ENCODE measurements at regions of chr4 and their contacts with region 1.

Region 1: GRCh38 chr4:110211007-110211769 is 12.8 kb upstream of the ELOVL6 start:
- DNase-seq: peak in 4 of 5 donors; percentile 39 to 48 (median 43)
- H3K4me3 ChIP-seq: no peak overlapping the region
- H3K4me3 Mint-ChIP-seq: peak overlapping the region in 3 of 8 donors; percentile 35 to 49 (median 36)
- H3K27ac ChIP-seq: no peak overlapping the region
- H3K27ac Mint-ChIP-seq: no peak overlapping the region
- H3K4me1 ChIP-seq: no peaks in the 10 kb centered on the region
- H3K4me1 Mint-ChIP-seq: peaks cover 0 to 5% (median 3%) of the 10 kb centered on the region in 4 donors
- H3K27me3 ChIP-seq: no peaks in the 10 kb centered on the region
- H3K27me3 Mint-ChIP-seq: peaks cover 2 to 3% of the 10 kb centered on the region in 2 donors

Region 2: DNA sequence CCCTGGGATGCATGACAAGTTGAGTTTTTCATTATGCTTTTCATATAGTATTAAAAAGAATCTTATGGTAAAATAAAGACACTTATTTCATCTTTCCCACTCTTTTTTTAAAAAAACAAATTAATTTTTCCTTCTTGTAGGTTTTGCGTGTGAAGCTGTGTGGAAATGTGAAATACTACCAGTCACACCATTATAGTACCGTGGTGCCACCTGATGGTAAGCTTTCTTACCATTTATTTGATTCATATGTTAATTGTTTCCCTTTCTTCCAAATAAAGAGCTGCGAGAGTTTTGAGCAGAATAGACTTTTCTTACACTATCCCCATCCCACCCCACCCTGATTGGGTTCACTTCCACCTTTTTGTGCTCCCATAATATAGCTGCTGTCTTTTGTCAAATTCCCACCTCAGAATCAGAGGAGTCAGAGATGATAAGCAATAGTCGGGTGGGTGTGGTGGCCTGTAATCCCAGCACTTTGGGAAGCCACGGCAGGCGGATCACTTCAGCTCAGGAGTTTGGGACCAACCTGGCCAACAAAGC is 552.2 kb before region 1 on chr4:
- CTCF ChIA-PET with region 1: no interaction called
- POLR2A ChIA-PET with region 1: no interaction called
- intact Hi-C with region 1: no loop called
- DNase-seq: peak in 2 of 5 donors; percentile 22 to 24
- H3K4me3 ChIP-seq: no peak overlapping the region
- H3K4me3 Mint-ChIP-seq: no peak overlapping the region
- H3K27ac ChIP-seq: no peak overlapping the region
- H3K27ac Mint-ChIP-seq: peak overlapping the region in 4 of 7 donors; percentile 24 to 65 (median 47)
- H3K4me1 ChIP-seq: peaks cover 23% of the 10 kb centered on the region
- H3K4me1 Mint-ChIP-seq: peaks cover 22 to 49% (median 35%) of the 10 kb centered on the region in 4 donors
- H3K27me3 ChIP-seq: no peaks in the 10 kb centered on the region
- H3K27me3 Mint-ChIP-seq: no peaks in the 10 kb centered on the region

Region 3: GRCh38 chr4:110059556-110060191 is 151.5 kb before region 1 on chr4:
- CTCF ChIA-PET with region 1: interaction called, 12 read pairs
- POLR2A ChIA-PET with region 1: no interaction called
- intact Hi-C with region 1: no loop called
- DNase-seq: peak in 4 of 5 donors; percentile 20 to 45 (median 34)
- H3K4me3 ChIP-seq: peak overlapping the region in 1 of 2 donors; percentile 38
- H3K4me3 Mint-ChIP-seq: peak overlapping the region; percentile 51 to 82 (median 80)
- H3K27ac ChIP-seq: no peak overlapping the region
- H3K27ac Mint-ChIP-seq: peak overlapping the region; percentile 38 to 91 (median 69)
- H3K4me1 ChIP-seq: peaks cover 28% of the 10 kb centered on the region
- H3K4me1 Mint-ChIP-seq: peaks cover 28 to 44% (median 36%) of the 10 kb centered on the region in 4 donors
- H3K27me3 ChIP-seq: no peaks in the 10 kb centered on the region
- H3K27me3 Mint-ChIP-seq: no peaks in the 10 kb centered on the region

Region 4: DNA sequence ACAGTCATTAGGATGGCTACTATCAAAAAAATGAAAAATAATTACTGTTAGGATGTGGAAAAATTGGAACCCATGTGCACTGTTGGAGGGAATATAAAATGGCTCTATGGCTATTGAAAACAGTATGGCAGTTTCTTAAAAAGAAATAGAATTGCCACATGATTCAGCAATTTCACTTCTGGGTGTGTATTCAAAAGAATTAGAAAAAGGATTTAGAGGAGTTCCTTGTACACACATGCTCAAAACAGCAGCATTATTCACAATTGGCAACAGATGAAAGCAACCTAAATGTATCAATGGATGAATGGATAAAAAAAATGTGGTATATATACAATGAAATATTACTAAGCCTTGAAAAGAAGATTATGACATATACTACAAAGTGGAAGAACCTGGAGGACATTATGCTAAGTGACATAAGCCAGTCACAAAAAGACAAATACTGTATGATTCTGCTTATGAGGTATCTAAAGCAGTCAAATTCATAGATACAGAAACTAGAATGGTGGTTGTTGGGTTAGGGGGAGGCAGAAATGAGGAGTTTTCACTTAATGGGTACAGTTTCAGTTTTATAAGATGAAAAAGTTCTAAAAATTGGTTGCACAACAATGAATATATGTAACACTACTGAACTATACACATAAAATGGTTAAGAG is 136.0 kb before region 1 on chr4:
- CTCF ChIA-PET with region 1: no interaction called
- POLR2A ChIA-PET with region 1: no interaction called
- intact Hi-C with region 1: no loop called
- DNase-seq: no peak
- H3K4me3 ChIP-seq: no peak overlapping the region
- H3K4me3 Mint-ChIP-seq: no peak overlapping the region
- H3K27ac ChIP-seq: no peak overlapping the region
- H3K27ac Mint-ChIP-seq: no peak overlapping the region
- H3K4me1 ChIP-seq: no peaks in the 10 kb centered on the region
- H3K4me1 Mint-ChIP-seq: peaks cover 0 to 5% (median under 1%) of the 10 kb centered on the region in 4 donors
- H3K27me3 ChIP-seq: no peaks in the 10 kb centered on the region
- H3K27me3 Mint-ChIP-seq: peaks cover 0 to 1% of the 10 kb centered on the region in 2 donors

Region 5: DNA sequence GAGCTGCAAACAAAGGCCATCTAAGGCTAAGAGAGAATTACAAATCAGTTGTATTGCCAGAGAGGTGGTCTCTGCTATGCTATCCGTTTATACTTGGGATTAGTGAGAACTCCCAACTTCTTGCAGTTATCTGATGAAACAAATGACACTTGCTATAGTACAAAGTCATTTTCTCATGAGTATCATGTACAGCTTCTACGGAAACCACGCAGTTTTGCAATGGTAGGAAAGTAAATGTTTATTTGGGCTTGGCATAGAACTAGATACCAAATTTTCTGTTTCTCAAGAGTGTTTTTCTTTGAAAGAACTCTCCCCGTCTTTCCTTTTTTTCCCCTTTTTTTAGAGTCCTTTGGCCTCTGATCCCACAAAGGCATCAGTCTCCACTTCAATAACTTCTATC is 136.6 kb after region 1 on chr4:
- CTCF ChIA-PET with region 1: no interaction called
- POLR2A ChIA-PET with region 1: no interaction called
- intact Hi-C with region 1: no loop called
- DNase-seq: no peak
- H3K4me3 ChIP-seq: no peak overlapping the region
- H3K4me3 Mint-ChIP-seq: no peak overlapping the region
- H3K27ac ChIP-seq: no peak overlapping the region
- H3K27ac Mint-ChIP-seq: no peak overlapping the region
- H3K4me1 ChIP-seq: no peaks in the 10 kb centered on the region
- H3K4me1 Mint-ChIP-seq: no peaks in the 10 kb centered on the region
- H3K27me3 ChIP-seq: no peaks in the 10 kb centered on the region
- H3K27me3 Mint-ChIP-seq: peaks cover 12 to 14% of the 10 kb centered on the region in 2 donors